ENCODE measurements at regions of chr9 and their contacts with region 1.

Region 1: GRCh38 chr9:133184962-133185361 is 21.2 kb upstream of the GBGT1 start:
- DNase-seq: no peak
- ATAC-seq: no peak
- H3K4me3 Mint-ChIP-seq: no peak overlapping the region
- H3K27ac Mint-ChIP-seq: no peak overlapping the region
- H3K4me1 Mint-ChIP-seq: peaks cover 9% of the 10 kb centered on the region
- H3K27me3 Mint-ChIP-seq: peaks cover 30% of the 10 kb centered on the region
- CTCF ChIP-seq: no peak

Region 2: DNA sequence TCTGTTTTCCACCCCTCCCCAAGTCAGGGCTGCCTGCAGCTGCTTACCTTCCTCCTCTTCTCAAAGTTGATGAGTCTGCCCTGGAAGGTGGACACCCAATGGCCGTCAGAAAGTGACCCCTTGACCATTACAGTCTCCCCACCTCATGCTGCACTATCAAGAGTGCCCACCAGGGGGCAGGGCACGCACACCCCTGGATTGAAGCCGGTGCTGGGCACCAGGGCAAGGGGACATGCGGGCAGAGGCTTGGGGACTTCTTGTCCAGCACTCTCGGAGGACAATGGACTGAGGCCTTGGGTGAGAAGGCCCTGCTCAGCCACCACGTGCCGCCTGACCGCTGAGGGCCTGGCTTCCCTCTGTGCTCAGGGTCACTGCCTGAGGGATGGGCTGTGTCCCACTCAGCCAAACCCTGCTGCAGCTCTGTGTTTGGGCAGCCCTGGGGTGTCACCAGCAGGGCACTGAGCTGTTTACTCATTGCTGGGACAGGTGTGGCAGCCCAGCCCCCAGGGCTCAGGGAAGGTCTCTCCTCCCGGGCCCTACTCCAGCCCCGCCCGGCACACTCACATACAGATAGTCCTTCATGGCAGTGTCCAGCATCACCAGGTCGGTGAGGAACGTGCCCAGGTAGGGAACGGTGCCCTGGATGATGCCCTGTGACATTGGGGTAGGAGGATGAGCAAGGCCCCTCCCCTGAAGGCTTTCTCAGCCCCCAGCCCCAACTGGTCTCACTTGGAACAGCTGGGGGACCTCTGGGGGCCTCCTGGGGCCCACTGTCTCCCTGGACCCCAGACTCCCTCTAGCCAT is 81.6 kb before region 1 on chr9:
- CTCF ChIA-PET with region 1: no interaction called
- POLR2A ChIA-PET with region 1: no interaction called
- intact Hi-C with region 1: loop called (anchors 1 kb)
- DNase-seq: peak; percentile 69
- ATAC-seq: peak; percentile 90
- H3K4me3 Mint-ChIP-seq: no peak overlapping the region
- H3K27ac Mint-ChIP-seq: no peak overlapping the region
- H3K4me1 Mint-ChIP-seq: no peaks in the 10 kb centered on the region
- H3K27me3 Mint-ChIP-seq: no peaks in the 10 kb centered on the region
- CTCF ChIP-seq: peak; percentile 71

Region 3: DNA sequence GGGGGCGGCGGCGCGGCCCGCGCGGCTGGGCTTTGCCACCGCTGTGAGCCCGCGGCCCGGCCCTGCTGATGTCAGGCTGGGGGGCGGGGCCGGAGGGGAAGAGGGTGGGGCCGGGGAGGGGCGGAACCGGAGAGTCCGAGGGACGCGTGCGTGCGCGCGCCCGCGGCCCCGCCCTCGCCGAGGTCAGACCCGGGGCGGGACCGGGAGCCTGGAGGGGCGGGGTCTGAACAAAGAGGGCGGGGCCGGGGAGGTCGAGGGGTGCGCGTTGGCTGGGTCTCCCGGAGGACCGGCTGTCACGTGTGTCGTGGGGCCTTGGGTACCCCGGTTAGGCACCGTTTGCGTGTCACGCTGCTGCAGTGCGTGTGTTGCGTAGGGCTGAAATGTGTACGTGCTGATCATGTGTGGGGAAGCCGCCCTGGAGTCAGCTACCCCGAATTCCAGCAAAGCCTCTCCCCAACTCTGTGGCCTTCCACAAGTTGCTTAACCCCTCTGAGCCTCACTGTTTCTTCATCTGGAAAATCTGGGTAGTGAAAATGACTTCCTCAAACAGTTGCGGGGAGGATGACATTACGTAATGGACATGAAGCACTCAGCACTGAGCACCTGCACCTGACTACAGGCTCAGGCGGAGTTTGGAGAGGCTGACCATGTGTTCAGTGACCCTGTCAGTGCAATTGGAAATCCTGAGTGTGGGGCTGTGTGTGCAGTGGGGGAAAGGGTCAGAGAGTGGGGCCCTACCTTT is 63.6 kb before region 1 on chr9 and contains the start of gene RALGDS:
- CTCF ChIA-PET with region 1: no interaction called
- POLR2A ChIA-PET with region 1: no interaction called
- intact Hi-C with region 1: no loop called
- DNase-seq: peak; percentile 86
- ATAC-seq: peak; percentile 81
- H3K4me3 Mint-ChIP-seq: peak within 1 kb of the TSS; percentile 82
- H3K27ac Mint-ChIP-seq: peak within 1 kb of the TSS; percentile 94
- H3K4me1 Mint-ChIP-seq: peaks cover 68% of the 10 kb centered on the region
- H3K27me3 Mint-ChIP-seq: no peaks in the 10 kb centered on the region
- CTCF ChIP-seq: no peak
- total RNA-seq, gene RALGDS: 21.2 and 29.2 TPM in 2 replicates

Region 4: GRCh38 chr9:133170716-133171559 is 14.0 kb before region 1 on chr9:
- CTCF ChIA-PET with region 1: interaction called, 12 read pairs
- POLR2A ChIA-PET with region 1: no interaction called
- intact Hi-C with region 1: no loop called
- DNase-seq: no peak
- ATAC-seq: peak; percentile 66
- H3K4me3 Mint-ChIP-seq: peak overlapping the region; percentile 73
- H3K27ac Mint-ChIP-seq: no peak overlapping the region
- H3K4me1 Mint-ChIP-seq: peaks cover 17% of the 10 kb centered on the region
- H3K27me3 Mint-ChIP-seq: peaks cover 7% of the 10 kb centered on the region
- CTCF ChIP-seq: no peak

Region 5: GRCh38 chr9:133356391-133357091 is 171.6 kb after region 1 on chr9 and contains the starts of genes SURF1 and SURF2:
- CTCF ChIA-PET with region 1: interaction called, 3 read pairs
- POLR2A ChIA-PET with region 1: interaction called, 6 read pairs
- intact Hi-C with region 1: loop called (anchors 1 kb)
- DNase-seq: peak; percentile 87
- ATAC-seq: peak; percentile 92
- H3K4me3 Mint-ChIP-seq: peak within 1 kb of the TSS; percentile 88
- H3K27ac Mint-ChIP-seq: peak within 1 kb of the TSS; percentile 82
- H3K4me1 Mint-ChIP-seq: peaks cover 43% of the 10 kb centered on the region
- H3K27me3 Mint-ChIP-seq: no peaks in the 10 kb centered on the region
- CTCF ChIP-seq: no peak
- total RNA-seq, gene SURF1: 33.6 and 38.9 TPM in 2 replicates
- total RNA-seq, gene SURF2: 17.3 and 17.8 TPM in 2 replicates

Region 6: GRCh38 chr9:133406480-133407307 is 221.7 kb after region 1 on chr9:
- CTCF ChIA-PET with region 1: interaction called, 6 read pairs
- POLR2A ChIA-PET with region 1: no interaction called
- intact Hi-C with region 1: loop called (anchors 1 kb)
- DNase-seq: peak; percentile 71
- ATAC-seq: peak; percentile 95
- H3K4me3 Mint-ChIP-seq: no peak overlapping the region
- H3K27ac Mint-ChIP-seq: peak overlapping the region; percentile 61
- H3K4me1 Mint-ChIP-seq: peaks cover 6% of the 10 kb centered on the region
- H3K27me3 Mint-ChIP-seq: no peaks in the 10 kb centered on the region
- CTCF ChIP-seq: peak; percentile 56

Measured in activated B cell treated with CpG ODN at 0.5 μM for 24 hours (primary cell).